Heart left ventricle (tissue), 16 donors: ENCODE measurements at regions of chr1 and their contacts with region 1.

Region 1: DNA sequence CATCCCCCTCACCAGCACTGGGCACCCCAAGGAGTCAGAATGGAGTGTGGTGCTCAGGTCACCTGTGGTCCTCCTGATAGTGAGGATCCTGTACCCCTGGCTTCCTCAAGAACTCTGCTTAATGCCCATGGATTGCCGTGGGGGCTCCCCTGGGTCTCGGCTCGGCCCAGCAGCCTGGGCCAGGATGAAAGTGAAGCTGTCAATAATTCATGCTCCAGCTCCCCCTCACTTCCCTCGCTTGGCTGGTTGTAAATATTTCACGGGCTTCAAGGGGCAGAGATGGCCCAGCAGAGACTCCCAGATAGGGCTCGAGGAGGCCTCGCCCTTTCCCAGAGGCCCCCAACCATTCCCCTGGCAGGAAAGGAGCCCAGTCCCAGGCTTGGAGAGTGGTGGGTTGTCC is 42.6 kb upstream of the KCNA10 start:
- DNase-seq: no peak
- ATAC-seq: no peak
- H3K4me3 ChIP-seq: no peak overlapping the region
- H3K27ac ChIP-seq: no peak overlapping the region
- H3K4me1 ChIP-seq: peaks cover 0 to 3% (median 0%) of the 10 kb centered on the region in 12 donors
- H3K27me3 ChIP-seq: peaks cover 0 to 13% (median 2%) of the 10 kb centered on the region in 9 donors
- CTCF ChIP-seq: no peak
- POLR2A ChIP-seq: no peak

Region 2: DNA sequence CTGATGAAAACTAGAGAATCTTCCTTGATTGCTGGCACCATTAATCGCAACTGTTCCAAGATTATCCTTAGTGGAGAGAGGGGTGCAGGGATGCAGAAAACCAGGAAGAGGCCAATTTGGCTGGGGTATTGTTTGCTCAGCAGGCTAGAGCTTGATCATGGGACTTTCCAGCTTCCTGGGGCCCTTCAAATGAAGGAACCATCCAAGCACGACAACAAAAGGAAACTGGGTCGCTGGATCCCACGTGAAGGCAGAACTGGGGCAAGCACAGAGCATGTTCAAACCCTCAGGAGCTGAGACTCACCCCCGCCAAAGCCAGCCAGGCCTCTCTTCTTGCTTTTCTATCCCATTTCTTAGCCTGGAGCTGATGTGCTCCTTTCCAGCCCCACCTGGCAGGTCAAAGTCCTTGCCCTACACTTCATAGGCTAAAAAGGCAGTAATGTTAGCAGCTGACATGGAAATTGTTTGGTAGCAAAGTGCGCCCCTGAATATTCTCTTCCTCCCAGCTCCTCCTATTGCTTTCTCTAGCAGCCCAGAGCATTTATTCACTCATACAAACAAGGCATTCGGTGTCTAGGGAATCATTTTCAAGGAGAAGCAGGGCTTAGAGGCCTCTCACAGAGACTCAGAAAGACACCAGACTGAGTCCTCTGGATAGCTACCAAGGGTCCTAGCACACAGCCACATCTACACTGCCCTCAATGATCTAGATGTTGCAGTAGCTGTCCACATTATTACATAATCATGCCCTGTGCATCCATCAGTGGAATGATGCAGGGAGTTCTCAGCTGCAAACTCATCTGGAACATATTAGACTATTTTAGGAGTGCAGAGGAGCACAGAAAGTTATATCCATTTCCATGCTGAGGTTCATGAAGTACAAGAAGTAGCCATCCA is 33.1 kb after region 1 on chr1:
- intact Hi-C with region 1: loop called in 1 of 10 experiments (anchors 5 kb)
- DNase-seq: no peak
- ATAC-seq: no peak
- H3K4me3 ChIP-seq: no peak overlapping the region
- H3K27ac ChIP-seq: no peak overlapping the region
- H3K4me1 ChIP-seq: peaks cover 0 to 10% (median 0%) of the 10 kb centered on the region in 12 donors
- H3K27me3 ChIP-seq: peaks cover 0 to 18% (median 0%) of the 10 kb centered on the region in 9 donors
- CTCF ChIP-seq: no peak
- POLR2A ChIP-seq: no peak

Region 3: GRCh38 chr1:111116496-111116895 is 554.9 kb after region 1 on chr1:
- intact Hi-C with region 1: no loop called
- DNase-seq: no peak
- ATAC-seq: no peak
- H3K4me3 ChIP-seq: no peak overlapping the region
- H3K27ac ChIP-seq: no peak overlapping the region
- H3K4me1 ChIP-seq: no peaks in the 10 kb centered on the region
- H3K27me3 ChIP-seq: no peaks in the 10 kb centered on the region
- CTCF ChIP-seq: no peak
- POLR2A ChIP-seq: no peak